Sigmoid colon (tissue), 7 donors: ENCODE measurements at regions of chr6 and their contacts with region 1.

Region 1: DNA sequence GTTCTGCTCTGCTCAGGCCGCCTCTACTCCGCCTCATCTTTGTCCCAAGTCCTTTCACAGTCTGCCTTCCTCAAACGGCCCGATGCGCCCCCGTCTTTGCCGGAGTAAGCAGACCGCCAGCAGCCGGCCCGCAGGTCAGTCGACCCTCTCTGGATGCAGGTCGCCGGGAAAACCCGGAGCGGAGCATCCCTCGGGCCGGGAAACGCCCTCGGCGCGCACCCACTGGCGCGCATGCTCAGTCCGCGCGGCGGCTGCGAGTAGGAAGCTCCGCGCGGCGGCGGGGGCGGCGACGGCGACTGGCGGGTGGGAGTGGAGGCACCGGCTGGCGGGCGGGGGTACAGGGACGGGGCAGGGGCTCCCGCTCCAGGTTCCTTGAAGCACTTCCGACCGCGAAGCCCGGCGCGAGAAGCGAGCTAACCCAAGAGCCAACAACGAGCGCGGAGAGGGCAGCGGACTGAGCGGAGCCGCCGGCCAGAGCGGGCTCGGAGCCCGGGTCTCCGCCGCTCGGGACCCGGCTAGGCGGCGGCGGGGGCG is at the start of gene LRRC1:
- DNase-seq: peak; percentile 95
- H3K4me3 ChIP-seq: peak within 1 kb of the TSS; percentile 69 to 95 (median 84)
- H3K27ac ChIP-seq: peak within 1 kb of the TSS; percentile 81 to 90 (median 84)
- H3K4me1 ChIP-seq: peaks cover 0 to 37% (median 21%) of the 10 kb centered on the region in 4 donors
- H3K27me3 ChIP-seq: peaks cover 0 to 5% (median 0%) of the 10 kb centered on the region in 3 donors
- CTCF ChIP-seq: no peak
- EP300 ChIP-seq: no peak
- POLR2A ChIP-seq: peak; percentile 24 to 36
- total RNA-seq, gene LRRC1: 20.8 to 32.4 (median 24.4) TPM

Region 2: DNA sequence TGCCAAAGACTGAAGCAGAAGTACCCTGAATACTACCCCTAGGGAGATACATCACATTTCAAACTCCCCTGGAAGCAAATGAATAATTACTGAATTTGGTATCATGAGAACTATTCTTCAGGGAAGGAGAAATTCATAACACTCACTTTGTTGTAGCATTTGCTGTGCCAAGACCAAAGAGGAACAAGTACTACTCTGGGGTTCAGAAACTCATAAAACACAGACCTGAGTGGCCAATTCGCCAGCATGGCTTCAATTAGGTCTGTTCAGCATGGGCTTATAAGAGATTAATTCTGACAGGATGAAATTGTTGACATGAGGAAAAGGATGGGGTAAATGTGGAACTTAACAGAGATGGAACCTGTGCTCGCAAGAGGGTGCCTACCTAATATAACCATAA is 452.6 kb before region 1 on chr6:
- intact Hi-C with region 1: no loop called
- DNase-seq: no peak
- H3K4me3 ChIP-seq: no peak overlapping the region
- H3K27ac ChIP-seq: peak overlapping the region in 1 of 4 donors; percentile 37
- H3K4me1 ChIP-seq: peaks cover 0 to 87% (median 44%) of the 10 kb centered on the region in 4 donors
- H3K27me3 ChIP-seq: no peaks in the 10 kb centered on the region
- CTCF ChIP-seq: no peak
- EP300 ChIP-seq: no peak
- POLR2A ChIP-seq: no peak

Region 3: DNA sequence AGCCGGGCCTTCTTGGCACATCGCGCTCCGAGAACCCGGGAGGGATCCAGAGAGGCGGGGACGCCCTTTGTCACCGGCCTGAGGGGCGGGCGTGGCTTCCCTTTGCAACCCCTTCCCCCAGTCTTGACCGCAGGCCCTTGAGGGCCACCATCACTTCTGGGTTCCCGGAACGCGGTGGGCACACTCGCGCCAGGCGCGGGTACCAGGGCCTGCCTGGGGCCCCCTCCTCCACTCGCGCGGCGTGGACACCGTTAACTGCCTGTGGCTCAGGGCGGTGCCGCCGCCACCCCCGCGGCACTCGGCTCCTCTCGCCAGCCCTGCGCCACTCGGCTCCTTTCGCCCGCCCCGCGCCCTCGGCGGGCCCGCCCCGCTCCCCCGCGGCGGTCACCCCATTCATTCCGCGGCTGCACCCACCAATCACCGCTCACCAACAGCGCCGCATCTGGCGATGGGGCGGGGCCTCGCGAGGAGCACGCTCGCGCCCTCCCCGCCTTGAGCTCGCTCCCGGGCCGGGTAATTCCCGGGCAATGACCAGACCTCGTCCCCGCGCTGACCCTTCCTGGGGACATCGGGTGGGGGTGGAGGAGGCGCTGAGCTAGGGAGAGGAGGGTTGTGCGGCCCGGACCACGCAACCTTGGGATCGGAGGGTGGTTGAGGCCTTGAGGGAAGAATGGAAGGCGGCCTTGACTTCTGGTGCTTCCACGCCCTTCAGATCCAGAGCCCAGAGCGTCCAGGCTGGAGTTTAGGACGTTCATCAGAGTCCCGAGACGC is 435.5 kb before region 1 on chr6:
- intact Hi-C with region 1: loop called (anchors 10 kb)
- DNase-seq: peak; percentile 97
- H3K4me3 ChIP-seq: peak overlapping the region; percentile 51 to 72 (median 64)
- H3K27ac ChIP-seq: peak overlapping the region; percentile 89 to 96 (median 94)
- H3K4me1 ChIP-seq: peaks cover 0 to 16% (median 4%) of the 10 kb centered on the region in 4 donors
- H3K27me3 ChIP-seq: no peaks in the 10 kb centered on the region
- CTCF ChIP-seq: no peak
- EP300 ChIP-seq: peak in 2 of 4 donors; percentile 26 to 35
- POLR2A ChIP-seq: peak; percentile 28 to 53

Region 4: GRCh38 chr6:53825532-53826321 is 30.9 kb after region 1 on chr6:
- intact Hi-C with region 1: no loop called
- DNase-seq: no peak
- H3K4me3 ChIP-seq: no peak overlapping the region
- H3K27ac ChIP-seq: peak overlapping the region in 3 of 4 donors; percentile 30 to 56 (median 51)
- H3K4me1 ChIP-seq: peaks cover 0 to 87% (median 67%) of the 10 kb centered on the region in 4 donors
- H3K27me3 ChIP-seq: no peaks in the 10 kb centered on the region
- CTCF ChIP-seq: no peak
- EP300 ChIP-seq: no peak
- POLR2A ChIP-seq: no peak

Region 5: GRCh38 chr6:53837865-53838769 is 43.3 kb after region 1 on chr6:
- intact Hi-C with region 1: loop called (anchors 5 kb)
- DNase-seq: peak; percentile 86
- H3K4me3 ChIP-seq: no peak overlapping the region
- H3K27ac ChIP-seq: peak overlapping the region in 3 of 4 donors; percentile 61 to 76 (median 74)
- H3K4me1 ChIP-seq: peaks cover 0 to 77% (median 36%) of the 10 kb centered on the region in 4 donors
- H3K27me3 ChIP-seq: no peaks in the 10 kb centered on the region
- CTCF ChIP-seq: peak in 2 of 4 experiments; percentile 14 to 35
- EP300 ChIP-seq: peak in 3 of 4 donors; percentile 27 to 61 (median 54)
- POLR2A ChIP-seq: no peak

Region 6: GRCh38 chr6:53894091-53894490 is 99.3 kb after region 1 on chr6:
- intact Hi-C with region 1: loop called (anchors 10 kb)
- DNase-seq: peak; percentile 75
- H3K4me3 ChIP-seq: no peak overlapping the region
- H3K27ac ChIP-seq: peak overlapping the region in 2 of 4 donors; percentile 32 to 46
- H3K4me1 ChIP-seq: peaks cover 0 to 26% (median 19%) of the 10 kb centered on the region in 4 donors
- H3K27me3 ChIP-seq: no peaks in the 10 kb centered on the region
- CTCF ChIP-seq: no peak
- EP300 ChIP-seq: no peak
- POLR2A ChIP-seq: no peak